HCT116 (cell line): ENCODE measurements at regions of chr1 and their contacts with region 1.

Region 1: DNA sequence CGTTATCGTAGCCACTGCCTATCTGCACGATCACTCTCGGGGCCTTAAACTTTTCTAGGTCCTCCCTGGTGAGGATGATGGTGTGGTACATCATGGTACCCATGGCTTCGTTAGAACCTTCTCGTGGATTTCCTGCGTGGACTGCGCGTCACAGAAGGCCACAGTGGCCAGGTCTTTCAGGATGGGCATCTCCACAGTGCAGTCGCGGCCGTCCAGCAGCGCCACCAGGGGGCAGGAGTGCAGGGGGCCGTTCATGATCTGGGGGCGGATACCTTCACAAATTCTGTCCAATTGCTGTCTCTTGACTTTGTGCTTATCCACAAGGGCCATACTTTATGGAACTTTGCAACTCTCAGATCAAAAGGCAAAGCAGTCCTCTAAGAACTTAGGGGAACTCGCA is 69.6 kb downstream of the WLS start:
- DNase-seq: no peak
- ATAC-seq: peak; percentile 87
- H3K4me3 ChIP-seq: no peak overlapping the region
- H3K27ac ChIP-seq: no peak overlapping the region
- H3K4me1 ChIP-seq: no peaks in the 10 kb centered on the region
- H3K27me3 ChIP-seq: no peaks in the 10 kb centered on the region
- CTCF ChIP-seq: peak; percentile 11 to 63 (median 60); a peak in 4 of 6 replicates
- POLR2A ChIP-seq: no peak
- RAD21 ChIP-seq: peak; percentile 46

Region 2: GRCh38 chr1:67793562-67793961 is 369.2 kb before region 1 on chr1:
- CTCF ChIA-PET with region 1: no interaction called
- POLR2A ChIA-PET with region 1: no interaction called
- RAD21 ChIA-PET with region 1: no interaction called
- intact Hi-C with region 1: no loop called
- DNase-seq: no peak
- ATAC-seq: no peak
- H3K4me3 ChIP-seq: no peak overlapping the region
- H3K27ac ChIP-seq: no peak overlapping the region
- H3K4me1 ChIP-seq: peaks cover 0 to 15% of the 10 kb centered on the region in 2 experiments; a peak in 1 of 4 replicates
- H3K27me3 ChIP-seq: no peaks in the 10 kb centered on the region
- CTCF ChIP-seq: no peak
- POLR2A ChIP-seq: no peak
- RAD21 ChIP-seq: no peak

Region 3: GRCh38 chr1:68346188-68346808 is 183.5 kb after region 1 on chr1:
- CTCF ChIA-PET with region 1: no interaction called
- POLR2A ChIA-PET with region 1: no interaction called
- RAD21 ChIA-PET with region 1: no interaction called
- intact Hi-C with region 1: loop called (anchors 1 kb)
- DNase-seq: peak; percentile 45
- ATAC-seq: peak; percentile 42
- H3K4me3 ChIP-seq: no peak overlapping the region
- H3K27ac ChIP-seq: no peak overlapping the region
- H3K4me1 ChIP-seq: peaks cover 0 to 31% of the 10 kb centered on the region in 2 experiments; a peak in 3 of 4 replicates
- H3K27me3 ChIP-seq: no peaks in the 10 kb centered on the region
- CTCF ChIP-seq: peak; percentile 46 to 75 (median 57); a peak in 5 of 6 replicates
- POLR2A ChIP-seq: no peak
- RAD21 ChIP-seq: peak; percentile 57